Activated T-helper 1 cell treated with anti-CD3 and anti-CD28 coated beads, Interleukin-12 subunit alpha, Interleukin-12 subunit beta, Interleukin-2, Interleukin-4 antibody, amounts not matched to agents 30 ng/mL and 10 ng/mL and 1 ng/mL, durations not matched to agents 14 hours and 24 hours and 36 hours (primary cell): ENCODE measurements at regions of chr13 and their contacts with region 1.

Region 1: GRCh38 chr13:32315238-32316027 is at the starts of genes BRCA2 and ZAR1L:
- DNase-seq: peak; percentile 86
- H3K4me3 Mint-ChIP-seq: peak within 1 kb of the TSS; percentile 96
- H3K27ac Mint-ChIP-seq: peak within 1 kb of the TSS; percentile 100
- H3K4me1 Mint-ChIP-seq: peaks cover 48% of the 10 kb centered on the region
- H3K27me3 Mint-ChIP-seq: no peaks in the 10 kb centered on the region
- total RNA-seq, gene BRCA2: 16.7 and 18.9 TPM in 2 replicates
- total RNA-seq, gene ZAR1L: not detected in 2 replicates

Region 2: DNA sequence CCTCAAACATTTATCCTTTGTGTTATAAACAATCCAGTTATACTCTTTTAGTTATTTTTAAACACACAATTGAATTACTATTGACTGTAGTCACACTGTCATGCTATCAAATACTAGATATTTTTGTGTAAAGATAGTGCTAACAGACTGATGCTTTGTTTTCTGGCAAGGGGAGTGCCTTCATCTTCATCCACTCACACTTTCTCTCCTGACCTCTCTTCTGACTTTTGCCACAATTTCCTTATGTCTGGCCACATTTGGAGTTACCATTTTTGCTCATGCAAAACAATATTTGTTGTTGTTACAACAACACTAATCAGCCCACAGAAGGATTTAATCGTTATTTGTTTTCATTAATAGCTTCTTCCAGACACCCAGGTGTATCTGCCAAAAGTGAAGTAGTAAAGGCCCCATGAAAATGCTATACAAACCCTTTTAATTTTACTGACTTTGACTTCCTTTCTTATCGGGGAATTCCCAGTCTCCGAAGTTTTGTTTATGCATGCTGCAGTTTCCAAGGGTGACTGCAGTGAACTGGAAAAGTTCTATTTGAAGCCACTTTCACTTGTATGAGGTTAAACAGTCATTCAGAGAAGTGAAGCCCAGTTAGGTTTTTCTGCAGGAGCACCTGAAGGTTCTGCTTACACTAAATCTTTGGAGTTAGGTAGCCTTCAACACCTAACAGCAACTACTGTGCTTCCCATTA is 349.9 kb before region 1 on chr13:
- intact Hi-C with region 1: no loop called
- DNase-seq: no peak
- H3K4me3 Mint-ChIP-seq: no peak overlapping the region
- H3K27ac Mint-ChIP-seq: no peak overlapping the region
- H3K4me1 Mint-ChIP-seq: no peaks in the 10 kb centered on the region
- H3K27me3 Mint-ChIP-seq: peaks cover 27% of the 10 kb centered on the region

Region 3: GRCh38 chr13:32031025-32031814 is 284.2 kb before region 1 on chr13 and contains the start of gene FRY:
- intact Hi-C with region 1: loop called (anchors 1 kb)
- DNase-seq: peak; percentile 44
- H3K4me3 Mint-ChIP-seq: peak within 1 kb of the TSS; percentile 94
- H3K27ac Mint-ChIP-seq: peak within 1 kb of the TSS; percentile 82
- H3K4me1 Mint-ChIP-seq: peaks cover 52% of the 10 kb centered on the region
- H3K27me3 Mint-ChIP-seq: peaks cover 6% of the 10 kb centered on the region
- total RNA-seq, gene FRY: 2.4 and 3.2 TPM in 2 replicates

Region 4: DNA sequence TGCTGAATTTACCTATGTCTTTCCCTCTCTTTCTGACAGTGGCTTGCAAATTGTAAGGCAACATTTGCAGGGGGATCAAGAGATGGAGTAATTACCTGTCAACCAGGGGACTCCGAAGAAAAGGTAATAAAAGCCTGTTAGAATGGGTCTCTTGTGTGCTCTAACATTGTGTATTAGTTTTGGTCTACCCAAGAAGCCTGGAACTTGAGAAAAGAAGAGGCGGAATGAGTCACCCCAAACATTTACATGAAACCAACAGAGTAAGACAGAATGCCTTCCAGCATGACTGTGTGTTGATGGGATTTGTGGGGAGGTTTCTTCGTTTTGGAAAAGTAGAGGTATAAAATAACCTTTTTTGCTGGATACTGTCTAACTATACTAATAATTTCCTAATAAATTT is 37.0 kb before region 1 on chr13:
- intact Hi-C with region 1: no loop called
- DNase-seq: no peak
- H3K4me3 Mint-ChIP-seq: no peak overlapping the region
- H3K27ac Mint-ChIP-seq: no peak overlapping the region
- H3K4me1 Mint-ChIP-seq: peaks cover 5% of the 10 kb centered on the region
- H3K27me3 Mint-ChIP-seq: no peaks in the 10 kb centered on the region

Region 5: GRCh38 chr13:32538621-32539246 is 223.3 kb after region 1 on chr13 and contains the start of gene N4BP2L2:
- intact Hi-C with region 1: loop called (anchors 1 kb)
- DNase-seq: peak; percentile 88
- H3K4me3 Mint-ChIP-seq: peak within 1 kb of the TSS; percentile 96
- H3K27ac Mint-ChIP-seq: peak within 1 kb of the TSS; percentile 99
- H3K4me1 Mint-ChIP-seq: peaks cover 46% of the 10 kb centered on the region
- H3K27me3 Mint-ChIP-seq: peaks cover 8% of the 10 kb centered on the region
- total RNA-seq, gene N4BP2L2: 87.1 and 92.8 TPM in 2 replicates

Region 6: DNA sequence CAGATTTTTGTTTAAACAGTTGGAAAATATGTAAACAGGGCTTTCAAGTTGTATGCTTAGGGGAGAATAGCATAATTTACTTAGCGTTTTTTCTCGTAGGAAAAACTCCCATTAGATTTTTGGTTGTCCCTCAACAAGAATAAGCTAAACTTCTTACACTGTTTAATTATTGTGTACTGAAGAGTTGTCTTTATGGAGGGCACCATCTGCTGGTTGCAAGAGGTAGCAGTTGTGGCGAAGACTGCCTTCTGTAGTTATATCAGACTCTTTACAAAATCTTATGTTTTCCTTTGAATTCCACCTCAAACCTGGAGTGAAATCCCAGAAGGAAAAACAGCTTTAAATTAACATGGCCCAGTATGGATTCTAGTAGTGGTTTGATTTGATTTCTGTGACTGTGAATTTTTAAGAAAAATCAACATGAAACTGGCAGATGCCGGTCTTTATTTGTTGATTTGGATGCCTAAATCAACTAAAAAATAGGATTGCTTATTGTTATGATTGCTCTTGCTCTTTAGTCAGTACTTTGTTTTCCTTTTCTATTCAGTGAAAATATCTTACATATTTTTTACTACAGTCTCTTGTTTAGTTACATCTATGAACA is 324.2 kb after region 1 on chr13:
- intact Hi-C with region 1: loop called (anchors 10 kb)
- DNase-seq: peak; percentile 25
- H3K4me3 Mint-ChIP-seq: no peak overlapping the region
- H3K27ac Mint-ChIP-seq: no peak overlapping the region
- H3K4me1 Mint-ChIP-seq: peaks cover 34% of the 10 kb centered on the region
- H3K27me3 Mint-ChIP-seq: no peaks in the 10 kb centered on the region